ENCODE measurements at regions of chr6 and their contacts with region 1.

Region 1: DNA sequence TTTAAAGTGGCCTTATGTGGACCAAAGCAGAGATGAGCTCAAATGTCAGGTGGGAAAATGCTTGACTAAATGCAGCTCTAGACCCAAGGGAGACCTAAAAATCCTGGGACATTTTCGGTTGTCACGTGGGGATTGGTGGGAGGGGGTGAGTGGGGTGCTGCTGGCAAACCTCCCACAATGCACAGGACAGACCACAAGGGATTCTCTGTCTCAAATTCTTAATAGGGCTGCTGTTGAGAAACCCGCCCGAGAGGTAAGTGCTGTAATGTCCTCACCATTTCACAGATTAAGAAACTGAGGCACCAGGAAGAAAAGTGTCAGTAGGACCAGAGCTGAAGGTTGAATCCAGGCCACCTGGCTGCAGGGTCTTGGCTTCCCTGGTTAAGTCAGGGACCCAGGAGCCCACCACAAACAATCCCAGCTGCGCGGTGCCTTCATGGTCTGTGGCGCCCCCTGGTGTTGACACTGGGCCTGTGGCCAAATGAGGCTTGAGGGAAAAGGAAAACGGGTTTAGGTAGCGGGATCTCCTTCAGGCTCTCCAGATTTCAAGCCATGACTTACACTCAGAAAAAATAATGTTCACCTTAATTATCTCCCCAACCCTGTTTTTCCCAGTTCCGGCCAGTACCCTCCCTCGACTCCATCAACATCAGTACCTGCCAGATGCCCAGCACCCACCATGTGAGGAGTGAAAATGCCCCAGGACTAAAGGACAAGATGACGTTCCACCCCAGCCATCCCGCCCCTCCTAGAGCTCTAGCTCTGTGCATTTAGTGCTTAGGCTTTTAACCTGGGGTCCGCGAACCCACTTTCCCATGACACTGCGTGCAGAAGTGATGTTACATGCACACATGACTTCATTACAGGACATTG is 7.2 kb downstream of the HLA-G start:
- DNase-seq: peak; percentile 54
- H3K4me3 ChIP-seq: no peak overlapping the region
- H3K27ac ChIP-seq: no peak overlapping the region
- H3K4me1 ChIP-seq: peaks cover 3% of the 10 kb centered on the region
- H3K27me3 ChIP-seq: no peaks in the 10 kb centered on the region
- CTCF ChIP-seq: peak; percentile 33 to 65 (median 61)
- POLR2A ChIP-seq: no peak

Region 2: DNA sequence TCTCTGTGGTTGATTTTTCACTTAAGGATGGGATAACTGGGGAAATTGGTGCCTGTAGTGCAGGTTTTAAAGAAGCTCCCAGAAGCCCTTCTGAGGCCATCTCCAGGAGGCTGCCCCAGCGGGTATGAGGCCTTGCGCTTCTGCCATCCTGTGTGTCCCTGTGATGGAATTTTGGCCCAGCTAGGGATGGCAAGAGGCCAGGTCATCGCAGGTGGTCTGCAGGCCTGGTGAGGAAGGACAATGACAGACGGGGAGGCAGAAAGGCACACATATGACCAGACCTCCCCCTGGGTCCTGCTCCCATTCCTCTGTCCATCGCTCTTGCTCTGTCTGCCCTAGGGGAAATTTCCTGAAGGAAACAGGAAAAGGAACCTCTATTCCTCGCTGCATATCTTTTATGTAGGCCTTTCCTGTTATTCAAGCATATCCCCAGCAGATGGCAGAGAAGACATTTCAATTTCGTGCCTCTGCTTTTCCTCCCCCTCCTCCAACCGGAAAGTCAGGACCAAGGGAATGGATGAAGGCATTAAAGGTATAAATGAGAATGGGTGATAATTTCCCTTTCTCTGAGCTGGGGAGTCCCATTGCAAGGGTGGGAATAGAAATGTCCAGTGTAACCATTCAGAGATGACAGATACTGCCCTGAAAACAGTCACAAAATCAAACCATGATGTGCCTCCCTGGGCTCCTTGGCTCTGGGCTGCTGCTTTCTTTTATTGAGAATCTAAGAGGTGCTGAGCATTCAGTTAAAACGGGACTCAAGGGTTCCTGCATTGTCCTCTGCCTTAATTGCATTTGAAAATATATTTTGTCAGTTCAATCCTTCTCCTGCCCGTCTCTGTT is 129.2 kb before region 1 on chr6:
- intact Hi-C with region 1: loop called (anchors 10 kb)
- DNase-seq: no peak
- H3K4me3 ChIP-seq: no peak overlapping the region
- H3K27ac ChIP-seq: no peak overlapping the region
- H3K4me1 ChIP-seq: no peaks in the 10 kb centered on the region
- H3K27me3 ChIP-seq: no peaks in the 10 kb centered on the region
- CTCF ChIP-seq: peak; percentile 28 to 68 (median 30)
- POLR2A ChIP-seq: no peak

Measured in testis (tissue), 5 donors.